Activated naive CD4-positive, alpha-beta T cell treated with anti-CD3 and anti-CD28 coated beads for 36 hours (primary cell): ENCODE measurements at regions of chr11 and their contacts with region 1.

Region 1: DNA sequence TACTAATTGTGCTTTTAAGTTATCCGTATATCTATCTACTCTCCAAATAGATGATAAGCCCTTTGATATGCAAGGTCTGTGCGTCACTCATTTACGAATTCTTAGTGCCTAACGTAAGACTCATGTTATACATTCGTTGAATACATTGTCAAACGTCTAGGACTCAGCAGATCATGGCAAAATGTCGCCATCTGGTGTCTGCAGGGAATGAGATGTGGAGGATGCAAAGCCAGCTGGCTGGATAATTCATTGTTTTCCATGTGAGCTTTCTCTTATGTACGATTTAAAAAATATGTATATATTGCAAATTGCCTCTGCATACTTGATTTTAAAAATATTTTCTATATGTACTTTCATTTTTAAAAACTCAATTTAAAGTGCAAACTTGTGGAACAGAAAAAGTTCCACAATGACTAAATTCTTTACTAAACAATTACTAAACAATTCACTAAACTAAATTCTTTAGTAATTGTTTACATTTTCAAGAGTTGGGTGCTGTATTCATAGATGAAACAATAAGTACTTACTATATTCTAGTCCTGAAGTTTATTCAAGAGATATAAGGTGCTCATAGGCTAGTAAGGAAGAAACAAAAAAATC is 33.8 kb downstream of the ZNF202 start:
- DNase-seq: peak; percentile 88
- H3K4me3 Mint-ChIP-seq: no peak overlapping the region
- H3K27ac Mint-ChIP-seq: no peak overlapping the region
- H3K4me1 Mint-ChIP-seq: peaks cover 2% of the 10 kb centered on the region
- H3K27me3 Mint-ChIP-seq: no peaks in the 10 kb centered on the region

Region 2: DNA sequence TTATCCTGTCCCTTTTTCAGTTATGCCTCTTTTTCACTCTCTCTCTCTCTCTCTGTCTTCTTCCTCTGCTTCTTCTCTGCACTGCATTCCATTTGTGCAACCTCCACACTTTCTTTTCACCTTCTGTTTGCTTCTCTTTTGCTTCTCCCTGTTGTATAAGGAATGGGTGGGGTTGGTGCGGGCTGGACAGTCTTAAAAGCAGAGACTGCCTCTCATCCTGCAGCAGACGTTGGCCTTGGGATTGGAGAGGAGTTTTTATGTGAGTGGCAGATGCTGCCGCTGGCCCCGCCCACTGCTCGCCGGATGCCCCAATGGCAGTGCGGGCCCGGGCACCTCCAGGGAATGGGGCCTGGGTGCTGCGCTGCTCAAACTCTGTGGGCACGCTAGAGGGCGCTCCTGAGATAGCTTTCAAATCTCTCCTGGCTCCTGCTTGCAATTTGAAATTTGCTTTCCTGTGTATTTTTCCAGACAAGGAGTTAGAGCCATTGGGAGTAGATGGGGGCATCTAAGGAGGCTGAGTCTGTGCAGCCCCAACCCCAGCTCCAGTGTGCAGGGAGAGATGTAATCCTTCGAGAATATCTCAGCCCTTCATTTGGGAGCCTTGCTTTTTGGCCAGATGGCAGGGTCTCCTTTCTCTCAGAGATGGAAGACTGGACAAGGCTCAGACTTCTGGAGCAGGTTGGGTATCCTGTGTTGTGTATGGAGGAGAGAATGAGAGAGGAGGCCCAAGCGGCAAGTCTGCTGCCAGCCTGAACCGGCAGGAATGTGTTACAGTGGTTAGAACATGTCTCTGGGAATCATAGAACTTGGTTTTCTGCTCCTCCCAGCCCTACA is 196.5 kb before region 1 on chr11:
- CTCF ChIA-PET with region 1: interaction called, 5 read pairs
- intact Hi-C with region 1: loop called (anchors 10 kb)
- DNase-seq: peak; percentile 82
- H3K4me3 Mint-ChIP-seq: no peak overlapping the region
- H3K27ac Mint-ChIP-seq: no peak overlapping the region
- H3K4me1 Mint-ChIP-seq: peaks cover 7% of the 10 kb centered on the region
- H3K27me3 Mint-ChIP-seq: no peaks in the 10 kb centered on the region

Region 3: GRCh38 chr11:123640677-123641494 is 66.8 kb before region 1 on chr11:
- CTCF ChIA-PET with region 1: interaction called, 303 read pairs
- intact Hi-C with region 1: loop called (anchors 1 kb)
- DNase-seq: peak; percentile 69
- H3K4me3 Mint-ChIP-seq: no peak overlapping the region
- H3K27ac Mint-ChIP-seq: no peak overlapping the region
- H3K4me1 Mint-ChIP-seq: peaks cover 4% of the 10 kb centered on the region
- H3K27me3 Mint-ChIP-seq: peaks cover 15% of the 10 kb centered on the region

Region 4: GRCh38 chr11:123681030-123681429 is 26.7 kb before region 1 on chr11:
- CTCF ChIA-PET with region 1: interaction called, 11 read pairs
- intact Hi-C with region 1: no loop called
- DNase-seq: peak; percentile 48
- H3K4me3 Mint-ChIP-seq: no peak overlapping the region
- H3K27ac Mint-ChIP-seq: peak overlapping the region; percentile 5
- H3K4me1 Mint-ChIP-seq: peaks cover 13% of the 10 kb centered on the region
- H3K27me3 Mint-ChIP-seq: no peaks in the 10 kb centered on the region

Region 5: DNA sequence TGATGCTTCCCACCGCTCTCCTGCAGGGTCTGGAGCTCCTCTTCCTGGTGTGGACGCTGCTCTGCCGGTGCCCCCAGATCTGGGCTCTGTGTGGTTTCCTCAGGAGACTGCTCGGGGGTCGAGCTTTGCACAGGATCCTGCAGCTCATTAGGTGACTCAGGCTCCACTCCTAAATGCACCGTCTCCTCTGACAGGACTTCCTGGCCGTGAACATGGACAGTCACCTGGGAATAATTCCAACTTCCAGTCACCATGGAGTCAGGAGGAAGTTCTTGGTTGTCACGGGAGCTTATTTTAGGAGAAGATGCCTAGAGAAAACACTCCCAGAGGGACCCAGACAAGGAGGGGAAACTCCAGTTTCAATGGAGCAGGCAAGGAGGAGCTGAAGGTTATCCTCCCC is 21.9 kb after region 1 on chr11:
- CTCF ChIA-PET with region 1: interaction called, 12 read pairs
- intact Hi-C with region 1: no loop called
- DNase-seq: no peak
- H3K4me3 Mint-ChIP-seq: no peak overlapping the region
- H3K27ac Mint-ChIP-seq: no peak overlapping the region
- H3K4me1 Mint-ChIP-seq: no peaks in the 10 kb centered on the region
- H3K27me3 Mint-ChIP-seq: no peaks in the 10 kb centered on the region